CD4-positive, alpha-beta T cell (primary cell): ENCODE measurements at regions of chr17 and their contacts with region 1.

Region 1: DNA sequence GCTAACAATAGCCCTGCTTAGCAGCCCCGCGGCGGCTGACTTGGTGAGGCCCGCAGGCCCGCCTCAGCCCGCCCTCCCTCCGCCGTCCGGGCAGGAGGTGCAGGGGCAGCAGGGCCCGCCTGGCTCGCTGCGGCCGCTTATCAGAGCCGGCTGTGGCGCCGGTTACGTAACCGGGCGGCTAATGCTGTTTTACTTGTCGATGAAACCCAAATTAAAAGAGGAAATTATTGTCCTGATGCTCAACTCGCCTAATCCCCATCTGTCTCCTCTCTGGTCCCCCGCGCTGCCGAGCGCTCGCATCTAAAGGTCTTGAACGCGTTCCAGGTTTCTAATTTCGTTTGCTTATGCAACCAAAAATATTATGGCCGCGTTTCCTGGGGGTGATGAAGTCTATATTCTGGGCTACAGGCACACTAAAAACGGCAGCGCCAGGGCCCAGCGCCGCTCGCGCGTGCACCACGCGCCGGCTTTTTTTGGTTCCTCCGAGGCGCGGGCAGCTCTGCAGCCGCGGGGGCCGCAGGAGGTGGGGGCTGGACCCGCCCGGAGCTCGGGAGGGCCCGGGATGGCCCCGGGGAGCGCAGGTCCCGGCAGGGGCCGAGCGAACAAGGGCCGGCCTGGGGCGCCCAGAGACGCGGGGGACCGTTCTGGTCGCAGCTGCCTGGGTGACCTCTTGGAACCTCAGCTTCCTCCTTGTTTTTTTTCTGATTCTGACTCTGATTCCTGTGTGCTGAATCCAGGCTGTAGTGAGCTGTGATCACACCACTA is 65.2 kb upstream of the TOB1 start:
- DNase-seq: peak in 13 of 14 experiments; percentile 31 to 77 (median 40)
- ATAC-seq: peak; percentile 80
- H3K4me3 ChIP-seq: peak overlapping the region; percentile 61
- H3K4me3 Mint-ChIP-seq: peak overlapping the region; percentile 81
- H3K27ac ChIP-seq: peak overlapping the region; percentile 31 to 72
- H3K27ac Mint-ChIP-seq: peak overlapping the region; percentile 87
- H3K4me1 ChIP-seq: peaks cover 51% of the 10 kb centered on the region
- H3K4me1 Mint-ChIP-seq: peaks cover 32% of the 10 kb centered on the region
- H3K27me3 ChIP-seq: no peaks in the 10 kb centered on the region
- H3K27me3 Mint-ChIP-seq: no peaks in the 10 kb centered on the region
- CTCF ChIP-seq: no peak

Region 2: DNA sequence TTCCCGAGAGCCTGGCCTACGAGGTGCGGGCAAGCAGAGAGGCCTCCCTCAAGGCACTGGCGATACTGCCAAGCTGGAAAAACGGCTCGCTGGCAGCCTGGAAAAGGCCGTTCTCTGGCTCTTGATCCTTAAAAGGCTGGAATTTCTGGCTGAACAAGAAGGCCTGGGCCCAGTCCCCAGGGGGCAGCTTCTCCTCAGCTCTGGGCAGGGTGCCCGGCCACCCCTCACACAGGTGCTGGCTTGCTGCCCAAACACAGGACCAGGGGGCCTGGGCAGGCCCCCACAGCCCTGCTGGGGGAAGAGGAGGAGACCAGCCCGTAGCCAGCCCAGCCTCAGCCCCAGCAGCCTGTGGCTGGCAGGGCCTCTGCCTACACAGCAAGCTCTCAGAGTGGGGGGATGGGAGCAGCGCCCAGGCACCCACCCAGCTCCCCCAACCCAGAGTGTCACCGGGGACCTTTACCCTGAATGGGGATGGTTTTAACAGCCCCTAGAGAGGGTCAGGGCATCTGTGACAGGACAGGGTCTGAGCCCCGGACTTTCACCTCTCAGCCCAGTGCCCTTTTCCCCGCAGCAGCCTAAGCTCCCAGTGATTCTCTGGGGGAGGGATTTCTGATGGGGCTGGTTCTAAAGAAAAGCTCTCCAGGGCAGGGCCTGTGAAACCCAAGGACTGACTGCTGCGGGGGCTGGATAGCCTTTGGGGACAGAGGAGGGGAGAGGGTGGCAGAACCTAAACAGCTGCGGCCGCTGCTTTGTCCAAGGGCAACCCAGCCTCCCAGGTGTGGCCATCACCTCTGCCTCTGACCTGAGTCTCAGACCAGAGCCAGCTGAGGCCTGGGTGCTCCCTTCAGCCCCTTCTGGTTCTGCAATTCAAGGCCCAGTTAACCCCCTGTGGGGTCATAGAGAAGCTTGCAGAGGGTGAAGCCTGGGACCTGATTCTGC is 26.5 kb before region 1 on chr17:
- CTCF ChIA-PET with region 1: interaction called, 3 read pairs
- POLR2A ChIA-PET with region 1: interaction called, 30 read pairs
- intact Hi-C with region 1: no loop called
- DNase-seq: no peak
- ATAC-seq: no peak
- H3K4me3 ChIP-seq: no peak overlapping the region
- H3K4me3 Mint-ChIP-seq: no peak overlapping the region
- H3K27ac ChIP-seq: peak overlapping the region in 1 of 2 donors; percentile 80
- H3K27ac Mint-ChIP-seq: peak overlapping the region; percentile 86
- H3K4me1 ChIP-seq: peaks cover 84% of the 10 kb centered on the region
- H3K4me1 Mint-ChIP-seq: peaks cover 66% of the 10 kb centered on the region
- H3K27me3 ChIP-seq: no peaks in the 10 kb centered on the region
- H3K27me3 Mint-ChIP-seq: no peaks in the 10 kb centered on the region
- CTCF ChIP-seq: no peak

Region 3: GRCh38 chr17:50909765-50910605 is 21.3 kb before region 1 on chr17:
- CTCF ChIA-PET with region 1: interaction called, 3 read pairs
- POLR2A ChIA-PET with region 1: interaction called, 30 read pairs
- intact Hi-C with region 1: loop called in 1 of 2 experiments (anchors 1 kb)
- DNase-seq: peak; percentile 65 to 95 (median 80)
- ATAC-seq: peak; percentile 89
- H3K4me3 ChIP-seq: peak overlapping the region; percentile 4
- H3K4me3 Mint-ChIP-seq: peak overlapping the region; percentile 83
- H3K27ac ChIP-seq: peak overlapping the region; percentile 67 to 81
- H3K27ac Mint-ChIP-seq: peak overlapping the region; percentile 86
- H3K4me1 ChIP-seq: peaks cover 92% of the 10 kb centered on the region
- H3K4me1 Mint-ChIP-seq: peaks cover 64% of the 10 kb centered on the region
- H3K27me3 ChIP-seq: no peaks in the 10 kb centered on the region
- H3K27me3 Mint-ChIP-seq: no peaks in the 10 kb centered on the region
- CTCF ChIP-seq: peak; percentile 6

Region 4: GRCh38 chr17:50919321-50920085 is 11.8 kb before region 1 on chr17:
- CTCF ChIA-PET with region 1: no interaction called
- POLR2A ChIA-PET with region 1: interaction called, 11 read pairs
- intact Hi-C with region 1: no loop called
- DNase-seq: peak; percentile 58 to 96 (median 83)
- ATAC-seq: peak; percentile 90
- H3K4me3 ChIP-seq: no peak overlapping the region
- H3K4me3 Mint-ChIP-seq: peak overlapping the region; percentile 68
- H3K27ac ChIP-seq: peak overlapping the region; percentile 52 to 86
- H3K27ac Mint-ChIP-seq: peak overlapping the region; percentile 93
- H3K4me1 ChIP-seq: peaks cover 54% of the 10 kb centered on the region
- H3K4me1 Mint-ChIP-seq: peaks cover 38% of the 10 kb centered on the region
- H3K27me3 ChIP-seq: no peaks in the 10 kb centered on the region
- H3K27me3 Mint-ChIP-seq: no peaks in the 10 kb centered on the region
- CTCF ChIP-seq: no peak

Region 5: GRCh38 chr17:50944054-50944901 is 13.0 kb after region 1 on chr17:
- CTCF ChIA-PET with region 1: no interaction called
- POLR2A ChIA-PET with region 1: interaction called, 18 read pairs
- intact Hi-C with region 1: no loop called
- DNase-seq: peak; percentile 55 to 88 (median 80)
- ATAC-seq: peak; percentile 89
- H3K4me3 ChIP-seq: peak overlapping the region; percentile 65
- H3K4me3 Mint-ChIP-seq: peak overlapping the region; percentile 83
- H3K27ac ChIP-seq: peak overlapping the region; percentile 68 to 77
- H3K27ac Mint-ChIP-seq: peak overlapping the region; percentile 85
- H3K4me1 ChIP-seq: peaks cover 61% of the 10 kb centered on the region
- H3K4me1 Mint-ChIP-seq: peaks cover 52% of the 10 kb centered on the region
- H3K27me3 ChIP-seq: no peaks in the 10 kb centered on the region
- H3K27me3 Mint-ChIP-seq: no peaks in the 10 kb centered on the region
- CTCF ChIP-seq: no peak

Region 6: GRCh38 chr17:51029568-51030463 is 98.5 kb after region 1 on chr17:
- CTCF ChIA-PET with region 1: no interaction called
- POLR2A ChIA-PET with region 1: no interaction called
- intact Hi-C with region 1: no loop called
- DNase-seq: peak in 3 of 14 experiments; percentile 66 to 85 (median 68)
- ATAC-seq: peak; percentile 80
- H3K4me3 ChIP-seq: peak overlapping the region; percentile 35
- H3K4me3 Mint-ChIP-seq: peak overlapping the region; percentile 84
- H3K27ac ChIP-seq: peak overlapping the region; percentile 33 to 83
- H3K27ac Mint-ChIP-seq: peak overlapping the region; percentile 91
- H3K4me1 ChIP-seq: peaks cover 5% of the 10 kb centered on the region
- H3K4me1 Mint-ChIP-seq: peaks cover 27% of the 10 kb centered on the region
- H3K27me3 ChIP-seq: no peaks in the 10 kb centered on the region
- H3K27me3 Mint-ChIP-seq: no peaks in the 10 kb centered on the region
- CTCF ChIP-seq: no peak